ENCODE measurements at regions of chr12 and their contacts with region 1.

Region 1: DNA sequence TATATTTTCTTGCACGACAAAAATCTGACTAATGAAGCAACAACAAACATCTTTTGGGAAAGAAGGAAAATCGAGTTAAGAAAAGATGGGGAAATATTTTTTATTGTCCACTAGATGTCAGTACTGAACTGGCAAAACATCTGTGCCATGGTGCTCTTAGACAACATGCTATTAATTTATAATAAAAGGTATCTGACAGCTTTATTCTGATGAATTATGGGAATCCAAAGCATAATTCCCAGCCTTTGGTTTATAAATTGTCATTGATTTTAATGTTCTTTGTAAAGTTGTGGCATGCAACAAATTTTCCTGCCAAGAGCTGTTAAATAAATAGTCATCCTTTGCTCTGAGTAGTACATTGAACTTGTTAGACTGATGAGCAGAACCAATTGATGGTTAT is 231.2 kb downstream of the ETNK1 start:
- DNase-seq: no peak
- ATAC-seq: no peak

Region 2: DNA sequence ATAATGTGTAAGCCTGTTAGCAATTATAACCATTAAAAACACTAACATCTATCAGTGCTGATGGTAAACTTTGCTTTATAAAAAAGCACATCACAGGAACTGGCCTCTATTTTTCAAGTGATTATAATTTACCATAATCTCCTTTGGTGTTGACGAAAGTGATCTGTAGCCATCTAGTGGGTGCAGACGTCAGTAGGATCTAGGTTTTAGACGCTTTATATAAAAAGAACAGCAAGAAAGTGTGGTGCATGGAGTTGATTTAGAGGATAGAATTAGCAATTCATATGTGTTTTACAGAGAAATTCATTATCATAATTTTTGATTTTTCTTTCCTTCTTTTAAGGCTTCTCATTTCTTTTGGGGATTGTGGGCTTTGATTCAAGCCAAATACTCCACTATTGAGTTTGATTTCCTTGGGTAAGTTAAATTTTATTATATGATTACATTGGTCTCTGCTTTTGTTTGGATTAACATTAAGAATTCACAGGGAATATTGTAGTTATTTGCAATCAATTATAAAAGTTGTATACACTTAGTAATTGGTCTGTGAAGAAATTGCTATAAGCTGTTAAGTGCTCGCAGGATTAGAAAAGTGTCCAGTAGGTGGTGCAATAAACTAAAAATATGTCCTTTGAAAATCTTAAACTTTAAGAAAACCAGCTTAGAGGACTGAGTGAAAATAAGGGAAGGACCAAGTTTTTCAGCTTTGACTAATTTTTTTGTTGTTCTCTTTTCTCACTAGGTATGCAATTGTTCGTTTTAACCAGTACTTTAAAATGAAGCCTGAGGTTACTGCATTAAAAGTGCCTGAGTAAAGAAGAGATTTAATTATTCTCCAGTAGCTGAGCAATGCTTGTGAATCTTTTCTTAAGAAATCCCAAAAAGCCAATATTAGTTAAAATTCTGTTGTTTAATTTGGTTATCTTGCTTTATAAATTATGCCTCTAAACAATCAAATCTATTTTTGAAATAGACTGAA is 171.7 kb before region 1 on chr12:
- intact Hi-C with region 1: no loop called
- DNase-seq: no peak
- ATAC-seq: no peak

Region 3: GRCh38 chr12:22981711-22982110 is 125.5 kb after region 1 on chr12:
- intact Hi-C with region 1: loop called (anchors 5 kb)
- DNase-seq: no peak
- ATAC-seq: no peak

Region 4: GRCh38 chr12:23335593-23335992 is 479.4 kb after region 1 on chr12:
- intact Hi-C with region 1: no loop called
- DNase-seq: no peak
- ATAC-seq: no peak